Activated T-helper 2 cell treated with anti-CD3 and anti-CD28 coated beads, Interferon-gamma antibody, Interleukin-2, Interleukin-4, amounts not matched to agents 10 μg/mL and 5 μg/mL and 100 μg/mL, durations not matched to agents 14 hours and 24 hours and 36 hours (primary cell): ENCODE measurements at regions of chr6 and their contacts with region 1.

Region 1: GRCh38 chr6:105646391-105646867 is 243.5 kb upstream of the PREP start:
- DNase-seq: peak; percentile 66
- H3K4me3 Mint-ChIP-seq: peak overlapping the region; percentile 22
- H3K27ac Mint-ChIP-seq: peak overlapping the region; percentile 84
- H3K4me1 Mint-ChIP-seq: peaks cover 81% of the 10 kb centered on the region
- H3K27me3 Mint-ChIP-seq: no peaks in the 10 kb centered on the region

Region 2: GRCh38 chr6:105402939-105403935 is 243.2 kb before region 1 on chr6 and contains the start of gene PREP:
- intact Hi-C with region 1: loop called (anchors 1 kb)
- DNase-seq: peak; percentile 82
- H3K4me3 Mint-ChIP-seq: peak within 1 kb of the TSS; percentile 96
- H3K27ac Mint-ChIP-seq: peak within 1 kb of the TSS; percentile 79
- H3K4me1 Mint-ChIP-seq: peaks cover 45% of the 10 kb centered on the region
- H3K27me3 Mint-ChIP-seq: peaks cover 7% of the 10 kb centered on the region
- total RNA-seq, gene PREP: 52.7 and 52.9 TPM in 2 replicates

Region 3: DNA sequence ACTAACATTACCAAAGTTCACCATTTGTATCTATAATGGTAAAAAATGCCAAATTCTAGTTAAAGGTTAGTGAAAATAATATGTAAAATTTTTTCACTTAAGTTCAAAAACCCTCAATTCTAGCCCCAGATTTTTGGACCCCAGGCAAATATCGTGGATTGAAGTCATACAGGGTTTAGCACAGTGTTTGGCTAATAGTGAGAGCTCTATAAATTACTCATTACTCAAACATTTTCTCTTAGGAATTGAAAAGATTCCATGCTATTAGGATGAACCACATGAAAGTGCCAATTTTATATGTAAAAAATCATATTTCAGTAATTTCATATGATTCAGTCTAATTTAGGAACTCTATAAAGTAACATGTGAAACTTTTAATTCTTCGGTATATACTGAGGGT is 73.3 kb before region 1 on chr6:
- intact Hi-C with region 1: no loop called
- DNase-seq: no peak
- H3K4me3 Mint-ChIP-seq: no peak overlapping the region
- H3K27ac Mint-ChIP-seq: no peak overlapping the region
- H3K4me1 Mint-ChIP-seq: peaks cover 14% of the 10 kb centered on the region
- H3K27me3 Mint-ChIP-seq: peaks cover 38% of the 10 kb centered on the region

Region 4: DNA sequence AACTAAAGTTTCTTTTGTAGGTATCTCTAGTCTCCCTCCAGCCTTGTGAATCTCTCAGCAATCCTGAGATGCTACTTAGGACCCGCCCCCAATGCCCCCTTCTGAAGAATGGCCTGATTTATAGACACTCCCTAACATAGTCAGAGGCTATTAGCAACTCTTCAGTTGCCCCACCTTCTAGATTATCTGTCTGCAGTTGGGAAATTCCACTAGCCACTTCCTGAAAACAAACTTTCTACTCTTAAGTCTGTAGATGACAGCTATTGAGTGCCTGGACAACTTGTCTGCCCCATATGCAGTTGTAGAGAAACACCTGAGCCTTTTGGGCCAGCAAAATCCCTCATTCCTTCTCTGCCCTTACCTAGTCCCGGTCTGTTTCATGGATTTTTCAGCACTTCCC is 55.4 kb before region 1 on chr6:
- intact Hi-C with region 1: loop called (anchors 1 kb)
- DNase-seq: no peak
- H3K4me3 Mint-ChIP-seq: no peak overlapping the region
- H3K27ac Mint-ChIP-seq: peak overlapping the region; percentile 48
- H3K4me1 Mint-ChIP-seq: peaks cover 62% of the 10 kb centered on the region
- H3K27me3 Mint-ChIP-seq: no peaks in the 10 kb centered on the region

Region 5: DNA sequence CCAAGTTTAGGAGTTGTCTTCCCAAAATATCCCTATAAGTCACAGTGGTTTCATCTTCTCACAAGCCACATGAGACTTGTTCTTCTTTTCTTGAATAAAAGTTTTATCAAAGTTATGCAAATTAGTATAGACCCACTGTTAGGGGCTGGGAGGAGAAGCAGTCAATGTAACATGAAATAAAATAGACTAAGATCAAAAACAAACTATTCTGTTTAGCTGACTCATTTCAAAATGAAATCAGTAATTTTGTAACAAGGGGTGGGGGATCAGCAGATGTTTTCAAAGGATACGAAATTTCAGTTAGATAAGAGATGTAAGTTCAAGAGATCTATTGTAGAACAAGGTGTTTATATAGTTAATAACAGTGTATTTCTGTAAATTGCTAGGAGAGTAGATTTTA is 100.1 kb after region 1 on chr6:
- intact Hi-C with region 1: loop called (anchors 2 kb)
- DNase-seq: no peak
- H3K4me3 Mint-ChIP-seq: no peak overlapping the region
- H3K27ac Mint-ChIP-seq: peak overlapping the region; percentile 47
- H3K4me1 Mint-ChIP-seq: peaks cover 59% of the 10 kb centered on the region
- H3K27me3 Mint-ChIP-seq: no peaks in the 10 kb centered on the region

Region 6: DNA sequence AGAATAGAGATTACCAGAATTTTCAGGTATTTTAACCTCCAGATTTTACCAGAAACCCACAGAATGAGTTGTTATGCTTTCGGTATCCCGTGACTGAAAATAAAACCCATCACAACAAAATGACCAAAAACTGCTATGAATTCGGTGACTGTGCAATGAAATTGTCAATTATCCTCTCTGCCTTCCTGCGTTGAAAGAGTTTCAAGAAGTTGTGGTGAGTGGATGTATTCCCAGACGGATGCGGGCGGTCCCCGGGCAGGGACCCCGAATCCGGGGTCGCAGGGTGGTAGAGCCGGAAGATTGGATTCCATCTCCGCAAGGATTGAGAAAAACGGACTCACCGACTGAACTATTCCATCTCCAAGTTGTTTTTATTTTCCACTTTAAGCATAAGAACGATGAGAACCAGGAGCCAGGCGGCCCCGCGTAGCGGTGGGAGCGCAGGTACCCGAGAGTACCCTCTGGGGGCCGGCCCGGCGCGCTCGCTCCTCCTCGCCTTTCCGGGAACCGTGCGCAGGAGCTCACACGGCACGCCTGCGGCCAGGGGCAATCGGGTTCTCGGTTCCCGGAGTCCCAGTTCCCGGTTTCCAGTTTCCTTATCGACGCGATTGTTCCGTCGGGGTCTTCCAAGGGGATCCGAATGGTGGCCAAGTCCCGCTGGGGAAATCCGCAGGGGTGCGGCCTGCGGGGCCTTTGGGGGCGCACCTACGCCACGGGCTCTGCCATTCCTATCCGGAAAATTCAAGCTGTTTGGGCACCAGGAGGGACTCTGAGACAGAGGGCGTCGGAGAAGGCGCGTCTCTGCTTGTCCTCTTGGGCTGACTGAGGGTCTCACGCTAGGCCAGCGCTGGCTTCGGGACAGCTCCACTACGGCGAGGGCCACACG is 334.8 kb after region 1 on chr6:
- intact Hi-C with region 1: loop called (anchors 1 kb)
- DNase-seq: peak; percentile 36
- H3K4me3 Mint-ChIP-seq: peak overlapping the region; percentile 74
- H3K27ac Mint-ChIP-seq: peak overlapping the region; percentile 85
- H3K4me1 Mint-ChIP-seq: peaks cover 56% of the 10 kb centered on the region
- H3K27me3 Mint-ChIP-seq: peaks cover 3% of the 10 kb centered on the region

Region 7: GRCh38 chr6:106223300-106223930 is 577.0 kb after region 1 on chr6:
- intact Hi-C with region 1: loop called (anchors 10 kb)
- DNase-seq: peak; percentile 48
- H3K4me3 Mint-ChIP-seq: no peak overlapping the region
- H3K27ac Mint-ChIP-seq: no peak overlapping the region
- H3K4me1 Mint-ChIP-seq: peaks cover 44% of the 10 kb centered on the region
- H3K27me3 Mint-ChIP-seq: no peaks in the 10 kb centered on the region